CD4-positive, alpha-beta memory T cell (primary cell): ENCODE measurements at regions of chr14 and their contacts with region 1.

Region 1: GRCh38 chr14:24431569-24432258 is 2.0 kb downstream of the KHNYN start:
- DNase-seq: peak; percentile 85 to 87 (median 85)
- H3K4me3 ChIP-seq: peak overlapping the region in 1 of 2 donors; percentile 87
- H3K4me3 Mint-ChIP-seq: peak overlapping the region; percentile 90 to 95 (median 92)
- H3K27ac ChIP-seq: peak overlapping the region; percentile 93
- H3K27ac Mint-ChIP-seq: peak overlapping the region; percentile 84 to 98 (median 96)
- H3K4me1 ChIP-seq: peaks cover 61% of the 10 kb centered on the region
- H3K4me1 Mint-ChIP-seq: peaks cover 27 to 66% (median 45%) of the 10 kb centered on the region in 4 donors
- H3K27me3 ChIP-seq: no peaks in the 10 kb centered on the region
- H3K27me3 Mint-ChIP-seq: no peaks in the 10 kb centered on the region

Region 2: GRCh38 chr14:24058260-24058950 is 373.3 kb before region 1 on chr14:
- CTCF ChIA-PET with region 1: interaction called, 12 read pairs
- POLR2A ChIA-PET with region 1: no interaction called
- intact Hi-C with region 1: loop called (anchors 5 kb)
- DNase-seq: peak; percentile 49 to 63 (median 61)
- H3K4me3 ChIP-seq: no peak overlapping the region
- H3K4me3 Mint-ChIP-seq: peak overlapping the region in 1 of 8 donors; percentile 59
- H3K27ac ChIP-seq: no peak overlapping the region
- H3K27ac Mint-ChIP-seq: peak overlapping the region in 6 of 7 donors; percentile 10 to 81 (median 36)
- H3K4me1 ChIP-seq: no peaks in the 10 kb centered on the region
- H3K4me1 Mint-ChIP-seq: peaks cover 2 to 8% (median 3%) of the 10 kb centered on the region in 4 donors
- H3K27me3 ChIP-seq: no peaks in the 10 kb centered on the region
- H3K27me3 Mint-ChIP-seq: peaks cover 2% of the 10 kb centered on the region in 2 donors

Region 3: DNA sequence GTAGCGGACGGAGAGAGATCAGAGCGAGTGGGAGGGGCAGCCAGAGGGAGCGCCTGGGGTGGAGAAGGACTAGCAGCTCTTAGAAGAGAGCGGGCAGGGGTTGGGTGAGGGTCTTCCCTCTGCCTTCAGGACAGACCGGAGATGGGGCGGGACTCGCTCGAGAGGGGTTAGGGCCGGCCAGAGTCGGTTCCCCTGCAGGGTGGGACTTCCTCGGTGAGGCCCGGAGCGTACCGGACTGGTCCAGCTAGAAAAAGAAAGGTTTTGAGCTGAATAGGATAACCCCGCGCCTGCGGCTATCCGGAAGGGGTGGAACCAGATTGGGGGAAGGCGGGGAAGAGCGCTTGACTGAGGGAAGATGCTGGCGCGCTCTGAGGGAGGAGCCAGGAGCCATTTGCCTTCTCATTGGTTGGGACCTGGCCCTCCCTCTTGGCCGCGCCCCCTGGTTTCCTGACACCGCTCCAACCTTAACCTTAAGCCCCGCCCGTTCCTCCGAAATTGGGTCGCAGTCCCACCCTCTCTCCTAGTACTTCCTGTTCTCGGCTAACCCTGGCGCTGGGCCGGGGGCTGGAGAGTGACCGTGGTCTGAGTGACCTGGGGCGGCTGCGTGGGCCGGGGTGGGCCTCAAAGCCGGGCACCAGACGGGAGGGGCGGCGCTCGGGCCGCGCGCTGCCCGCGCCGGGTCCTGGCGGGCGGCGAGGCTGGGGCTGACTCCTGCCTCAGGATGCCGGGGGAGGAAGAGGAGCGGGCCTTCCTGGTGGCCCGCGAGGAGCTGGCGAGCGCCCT is 284.5 kb before region 1 on chr14 and contains the start of gene RNF31:
- CTCF ChIA-PET with region 1: interaction called, 4 read pairs
- POLR2A ChIA-PET with region 1: interaction called, 10 read pairs
- intact Hi-C with region 1: no loop called
- DNase-seq: peak; percentile 95 to 99 (median 97)
- H3K4me3 ChIP-seq: peak within 1 kb of the TSS; percentile 85 to 99
- H3K4me3 Mint-ChIP-seq: peak within 1 kb of the TSS; percentile 97 to 100 (median 98)
- H3K27ac ChIP-seq: peak within 1 kb of the TSS; percentile 92
- H3K27ac Mint-ChIP-seq: peak within 1 kb of the TSS; percentile 95 to 99 (median 98)
- H3K4me1 ChIP-seq: peaks cover 63% of the 10 kb centered on the region
- H3K4me1 Mint-ChIP-seq: peaks cover 32 to 80% (median 54%) of the 10 kb centered on the region in 4 donors
- H3K27me3 ChIP-seq: no peaks in the 10 kb centered on the region
- H3K27me3 Mint-ChIP-seq: no peaks in the 10 kb centered on the region
- total RNA-seq, gene RNF31: 108 to 113 TPM

Region 4: GRCh38 chr14:24271134-24271833 is 160.4 kb before region 1 on chr14 and contains the start of gene RABGGTA:
- CTCF ChIA-PET with region 1: interaction called, 15 read pairs
- POLR2A ChIA-PET with region 1: interaction called, 22 read pairs
- intact Hi-C with region 1: loop called (anchors 1 kb)
- DNase-seq: peak; percentile 95 to 98 (median 97)
- H3K4me3 ChIP-seq: peak within 1 kb of the TSS; percentile 86 to 91
- H3K4me3 Mint-ChIP-seq: peak within 1 kb of the TSS; percentile 90 to 95 (median 91)
- H3K27ac ChIP-seq: peak within 1 kb of the TSS; percentile 94
- H3K27ac Mint-ChIP-seq: peak within 1 kb of the TSS; percentile 91 to 100 (median 99)
- H3K4me1 ChIP-seq: peaks cover 33% of the 10 kb centered on the region
- H3K4me1 Mint-ChIP-seq: peaks cover 24 to 46% (median 39%) of the 10 kb centered on the region in 4 donors
- H3K27me3 ChIP-seq: no peaks in the 10 kb centered on the region
- H3K27me3 Mint-ChIP-seq: no peaks in the 10 kb centered on the region
- total RNA-seq, gene RABGGTA: 55.6 to 62.5 TPM

Region 5: GRCh38 chr14:24332268-24332993 is 99.3 kb before region 1 on chr14:
- CTCF ChIA-PET with region 1: interaction called, 791 read pairs
- POLR2A ChIA-PET with region 1: interaction called, 361 read pairs
- intact Hi-C with region 1: loop called (anchors 1 kb)
- DNase-seq: peak; percentile 89 to 92 (median 90)
- H3K4me3 ChIP-seq: peak overlapping the region; percentile 24 to 51
- H3K4me3 Mint-ChIP-seq: peak overlapping the region; percentile 76 to 93 (median 87)
- H3K27ac ChIP-seq: no peak overlapping the region
- H3K27ac Mint-ChIP-seq: peak overlapping the region; percentile 65 to 98 (median 86)
- H3K4me1 ChIP-seq: peaks cover 64% of the 10 kb centered on the region
- H3K4me1 Mint-ChIP-seq: peaks cover 40 to 91% (median 59%) of the 10 kb centered on the region in 4 donors
- H3K27me3 ChIP-seq: peaks cover 11% of the 10 kb centered on the region
- H3K27me3 Mint-ChIP-seq: peaks cover 6 to 13% of the 10 kb centered on the region in 2 donors

Region 6: GRCh38 chr14:24411443-24412389 is 20.0 kb before region 1 on chr14:
- CTCF ChIA-PET with region 1: interaction called, 12 read pairs
- POLR2A ChIA-PET with region 1: interaction called, 22 read pairs
- intact Hi-C with region 1: no loop called
- DNase-seq: peak in 4 of 5 donors; percentile 26 to 34 (median 29)
- H3K4me3 ChIP-seq: no peak overlapping the region
- H3K4me3 Mint-ChIP-seq: no peak overlapping the region
- H3K27ac ChIP-seq: no peak overlapping the region
- H3K27ac Mint-ChIP-seq: no peak overlapping the region
- H3K4me1 ChIP-seq: no peaks in the 10 kb centered on the region
- H3K4me1 Mint-ChIP-seq: no peaks in the 10 kb centered on the region
- H3K27me3 ChIP-seq: no peaks in the 10 kb centered on the region
- H3K27me3 Mint-ChIP-seq: peaks cover 0 to 2% of the 10 kb centered on the region in 2 donors